ENCODE measurements at regions of chr12 and their contacts with region 1.

Region 1: DNA sequence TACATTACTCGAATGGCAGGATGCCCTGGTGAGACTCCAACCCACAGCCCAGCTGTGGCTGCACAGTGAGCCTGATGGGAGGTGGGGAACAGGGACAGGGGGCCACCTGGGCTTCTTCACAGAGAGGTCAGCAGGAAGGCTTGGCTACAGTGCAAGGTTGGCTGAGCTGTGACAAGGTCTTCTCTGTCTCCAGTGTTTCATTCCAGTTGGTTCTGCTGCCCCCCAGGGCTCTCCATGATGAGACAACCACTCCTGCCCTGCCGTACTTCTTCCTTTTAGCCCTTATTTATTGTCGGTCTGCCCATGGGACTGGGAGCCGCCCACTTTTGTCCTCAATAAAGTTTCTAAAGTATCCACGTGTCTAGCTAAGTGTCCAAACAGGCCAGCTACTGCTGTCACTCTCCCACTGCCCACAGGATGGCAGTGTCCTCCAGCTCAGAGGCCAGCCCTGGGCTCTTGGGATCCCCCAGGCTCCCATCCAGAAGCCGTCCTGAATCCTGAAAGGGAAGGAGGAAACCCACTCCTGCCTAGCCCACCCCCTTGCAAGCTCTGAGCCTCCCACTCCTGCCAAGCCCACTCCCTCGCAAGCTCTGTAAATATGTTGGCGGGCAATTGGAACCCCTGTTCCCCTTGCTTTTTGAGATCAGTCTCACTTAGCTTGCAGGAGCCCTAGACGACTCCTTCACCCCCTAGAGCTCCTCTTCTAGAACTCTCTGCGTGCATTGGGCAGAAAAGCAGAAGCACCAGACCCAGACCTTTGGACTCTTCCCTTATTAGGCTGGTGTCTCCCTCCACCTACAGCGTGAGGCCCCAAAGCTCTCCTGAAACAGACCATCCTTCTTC is 5.4 kb downstream of the C1QL4 start:
- DNase-seq: peak; percentile 77

Region 2: DNA sequence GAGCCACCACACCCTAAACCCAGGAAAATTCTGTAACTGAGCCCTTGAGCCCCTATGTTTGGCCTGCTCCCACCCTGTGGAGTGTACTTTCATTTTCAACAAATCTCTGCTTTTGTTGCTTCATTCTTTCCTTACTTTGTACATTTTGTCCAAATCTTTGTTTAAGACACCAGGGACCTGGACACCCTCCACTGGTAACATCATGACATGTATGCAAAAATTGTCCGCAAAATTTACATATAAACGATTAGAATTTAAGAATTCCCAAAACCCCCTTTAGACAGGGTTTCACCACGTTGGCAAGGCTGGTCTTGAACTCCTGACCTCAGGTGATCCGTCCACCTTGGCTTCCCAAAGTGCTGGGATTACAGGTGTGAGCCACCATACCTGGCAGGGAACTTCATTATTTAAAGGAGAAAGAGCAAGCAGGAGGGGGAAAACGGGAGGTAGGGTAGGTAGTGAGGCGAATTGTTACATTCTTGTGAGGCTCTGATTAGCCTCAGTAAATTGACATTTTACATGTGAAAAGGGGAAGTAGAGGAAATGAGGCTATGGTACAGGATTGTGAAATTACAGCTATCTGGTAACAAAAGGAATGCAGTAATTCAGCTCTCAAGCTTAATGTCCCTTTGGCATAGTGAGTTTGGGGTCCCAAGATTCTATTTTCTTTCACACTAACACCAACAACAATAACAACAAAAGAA is 170.4 kb before region 1 on chr12:
- CTCF ChIA-PET with region 1: no interaction called
- POLR2A ChIA-PET with region 1: no interaction called
- DNase-seq: no peak

Region 3: DNA sequence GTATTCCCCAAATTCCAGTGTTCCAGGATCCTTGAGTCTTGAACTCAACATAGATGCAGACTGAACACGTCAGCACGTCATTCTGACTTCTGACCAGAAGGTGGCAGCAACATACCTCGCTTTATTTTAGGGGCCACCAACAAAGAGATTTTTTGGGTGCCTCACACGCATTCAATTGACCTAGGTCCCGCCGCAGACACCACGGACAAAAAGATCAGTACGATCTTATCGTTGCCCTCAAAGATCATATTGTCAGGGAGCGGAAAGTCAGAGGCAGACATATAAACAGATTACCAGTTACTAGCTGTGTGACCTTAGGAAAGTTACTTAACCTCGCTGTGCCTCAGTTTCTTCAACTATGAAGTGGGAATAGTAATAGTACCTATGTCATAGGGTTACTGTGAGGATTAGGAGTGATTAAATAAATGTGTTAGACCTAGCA is 43.2 kb before region 1 on chr12:
- CTCF ChIA-PET with region 1: interaction called, 17 read pairs
- POLR2A ChIA-PET with region 1: interaction called, 3 read pairs
- DNase-seq: peak; percentile 76

Region 4: GRCh38 chr12:49296034-49296835 is 35.4 kb before region 1 on chr12:
- CTCF ChIA-PET with region 1: interaction called, 11 read pairs
- POLR2A ChIA-PET with region 1: interaction called, 5 read pairs
- DNase-seq: peak; percentile 88

Region 5: GRCh38 chr12:49309391-49309790 is 22.2 kb before region 1 on chr12:
- CTCF ChIA-PET with region 1: no interaction called
- POLR2A ChIA-PET with region 1: no interaction called
- DNase-seq: no peak

Region 6: DNA sequence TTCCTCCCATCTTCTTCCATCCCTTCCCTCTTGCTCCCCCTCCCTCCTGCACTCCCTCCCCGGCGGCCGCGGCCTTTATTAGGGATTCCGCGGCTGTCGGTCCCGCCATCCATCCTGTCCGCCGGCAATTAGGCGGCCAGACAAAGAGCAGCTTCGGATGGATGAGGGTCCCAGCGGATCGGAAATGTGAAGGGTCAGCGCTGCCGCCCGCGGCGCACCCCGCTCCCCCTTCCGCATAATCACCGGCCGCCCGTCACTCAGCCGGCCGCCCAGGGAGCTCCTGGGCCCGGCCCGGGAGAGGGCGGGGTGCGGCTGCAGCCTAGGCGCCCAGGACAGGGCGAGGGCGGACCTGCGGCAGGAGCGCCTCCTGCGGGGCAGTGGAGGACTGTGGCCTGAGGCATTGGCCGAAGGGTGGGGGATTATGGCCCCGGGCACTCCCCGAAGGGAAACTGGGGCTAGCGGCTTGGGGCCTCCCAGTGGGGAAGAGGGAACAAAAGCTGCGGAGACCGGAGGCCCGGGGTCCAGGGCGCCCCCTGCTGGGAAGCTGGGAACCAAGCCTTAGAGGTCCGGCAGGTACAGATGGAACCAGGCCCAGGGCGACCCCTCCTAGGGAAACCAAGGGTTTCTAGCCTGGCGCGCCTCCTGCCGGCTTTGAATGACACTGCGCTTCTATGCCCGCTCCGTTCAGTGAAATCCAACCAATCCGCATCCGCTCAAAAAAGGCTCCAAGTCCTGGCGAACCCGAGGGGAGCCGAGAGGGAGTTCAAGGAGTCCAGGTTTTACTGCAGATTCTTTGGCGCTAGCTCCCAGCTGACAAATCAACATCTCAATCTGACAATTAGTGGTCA is 10.7 kb after region 1 on chr12:
- CTCF ChIA-PET with region 1: interaction called, 55 read pairs
- POLR2A ChIA-PET with region 1: interaction called, 24 read pairs
- DNase-seq: peak; percentile 88

Region 7: GRCh38 chr12:49347384-49348237 is 16.0 kb after region 1 on chr12:
- CTCF ChIA-PET with region 1: interaction called, 55 read pairs
- POLR2A ChIA-PET with region 1: interaction called, 24 read pairs
- DNase-seq: peak; percentile 89

Region 8: DNA sequence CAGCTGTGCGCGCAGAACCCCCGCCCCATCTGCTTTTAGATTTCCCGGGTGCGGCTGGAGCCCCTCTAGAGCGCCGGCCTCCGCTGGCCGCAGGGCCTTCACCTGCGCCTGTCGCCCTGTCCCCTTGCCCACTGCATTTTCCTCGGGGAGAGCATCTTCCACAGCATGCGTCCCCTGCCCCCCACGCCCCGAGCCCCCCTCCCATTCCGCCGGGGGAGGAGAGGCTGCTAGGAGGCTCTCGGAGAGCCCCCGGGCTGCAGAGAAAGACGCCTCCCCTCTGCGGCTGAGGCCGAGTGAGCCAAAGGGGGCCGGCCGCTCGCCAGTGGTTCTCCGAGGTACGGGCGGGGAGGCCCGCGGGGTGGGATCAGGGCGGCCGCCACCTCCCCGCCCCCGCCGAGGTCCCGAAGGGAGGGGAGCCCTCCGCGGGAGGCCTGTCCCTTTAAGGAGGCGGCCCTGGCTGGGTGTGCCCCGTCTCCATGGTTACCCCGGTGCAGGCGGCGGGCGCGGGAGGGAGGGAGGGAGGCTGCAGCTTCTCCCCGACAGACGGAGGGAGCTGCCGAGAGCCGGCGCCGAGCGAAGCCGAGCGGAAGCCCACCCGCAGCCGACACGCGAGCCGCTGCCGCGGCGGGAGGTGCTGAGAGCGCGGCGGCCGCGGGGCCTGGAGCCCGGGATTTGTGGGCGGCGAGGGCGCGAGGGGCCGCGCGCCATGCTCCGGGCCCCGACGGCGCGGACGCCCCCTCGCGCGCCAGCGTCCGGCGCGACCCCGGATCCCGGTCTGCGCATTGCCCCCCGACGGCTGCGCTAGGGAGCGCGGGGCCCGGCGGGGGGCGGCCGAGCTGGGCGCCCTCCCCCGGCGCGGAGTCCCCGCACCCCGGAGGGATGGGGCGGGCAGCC is 207.2 kb after region 1 on chr12 and contains the start of gene KCNH3:
- CTCF ChIA-PET with region 1: no interaction called
- POLR2A ChIA-PET with region 1: no interaction called
- DNase-seq: peak; percentile 82

Measured in HEK293T (cell line).